WTC11 (cell line): ENCODE measurements at regions of chr9 and their contacts with region 1.

Region 1: GRCh38 chr9:128117613-128118471 is 9.7 kb downstream of the PTGES2 start:
- DNase-seq: peak; percentile 98
- ATAC-seq: peak; percentile 87
- H3K4me3 Mint-ChIP-seq: peak overlapping the region; percentile 50
- H3K27ac Mint-ChIP-seq: 0 out of 2 replicates have a peak overlapping the region, but pooled peaks have one; percentile 63
- H3K4me1 Mint-ChIP-seq: peaks cover 10% of the 10 kb centered on the region
- H3K27me3 Mint-ChIP-seq: no peaks in the 10 kb centered on the region
- CTCF ChIP-seq: peak; percentile 100

Region 2: DNA sequence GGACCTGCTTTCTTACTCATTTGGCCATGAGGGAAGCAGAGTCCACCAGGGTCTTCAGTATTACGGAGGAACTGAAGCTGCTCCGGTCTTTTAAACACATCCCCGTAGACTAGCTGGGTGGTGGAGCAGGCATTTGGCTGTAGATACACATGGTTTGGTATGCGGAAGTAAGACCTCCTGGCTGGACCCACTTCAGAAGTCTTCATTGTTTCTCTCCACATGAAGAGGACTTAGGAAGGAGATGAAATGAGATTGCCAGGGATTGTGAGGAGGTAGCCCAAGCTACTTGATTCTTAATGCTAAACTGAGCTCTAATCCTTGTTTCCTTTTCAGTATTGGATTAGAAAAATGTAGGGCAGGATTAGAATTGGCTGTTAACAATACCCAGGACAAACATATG is 472.9 kb before region 1 on chr9:
- CTCF ChIA-PET with region 1: no interaction called
- POLR2A ChIA-PET with region 1: no interaction called
- DNase-seq: no peak
- ATAC-seq: peak; percentile 47; the same call in 1 of the 2 replicates
- H3K4me3 Mint-ChIP-seq: no peak overlapping the region
- H3K27ac Mint-ChIP-seq: no peak overlapping the region; the same call in 1 of the 2 replicates
- H3K4me1 Mint-ChIP-seq: peaks cover 13% of the 10 kb centered on the region
- H3K27me3 Mint-ChIP-seq: no peaks in the 10 kb centered on the region
- CTCF ChIP-seq: no peak

Region 3: GRCh38 chr9:127943731-127944144 is 174.1 kb before region 1 on chr9:
- CTCF ChIA-PET with region 1: interaction called, 45 read pairs
- POLR2A ChIA-PET with region 1: no interaction called
- DNase-seq: peak; percentile 96
- ATAC-seq: peak; percentile 84
- H3K4me3 Mint-ChIP-seq: no peak overlapping the region
- H3K27ac Mint-ChIP-seq: peak overlapping the region; percentile 58
- H3K4me1 Mint-ChIP-seq: peaks cover 22% of the 10 kb centered on the region
- H3K27me3 Mint-ChIP-seq: no peaks in the 10 kb centered on the region
- CTCF ChIP-seq: peak; percentile 84

Region 4: DNA sequence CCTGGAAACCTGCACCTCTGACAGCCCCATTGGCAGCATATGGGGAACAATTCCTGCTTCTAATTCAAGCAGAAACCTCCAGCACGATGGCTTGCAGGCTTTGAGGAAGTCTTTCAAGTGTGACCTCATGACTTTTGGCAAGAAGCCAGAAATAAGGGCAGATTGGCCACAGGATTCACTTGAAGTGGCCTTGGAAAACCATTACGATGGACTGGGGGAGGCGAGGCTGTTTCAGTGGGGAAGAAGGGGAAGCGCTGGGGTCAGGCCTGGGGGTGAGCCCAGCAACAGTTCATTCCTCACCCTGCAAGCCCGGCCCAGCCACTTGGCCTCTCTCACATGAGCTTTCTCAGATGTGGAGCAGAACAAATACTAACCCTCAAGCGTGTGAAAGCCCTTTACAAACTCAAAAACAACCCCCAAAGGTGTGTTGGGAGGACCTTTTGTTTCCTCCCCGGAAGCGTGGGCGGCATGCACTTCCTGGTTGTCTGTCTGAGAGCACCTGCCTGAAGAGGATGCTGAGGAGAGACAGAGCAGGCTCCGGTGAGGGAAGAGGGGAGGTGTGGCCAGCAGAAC is 110.2 kb before region 1 on chr9:
- CTCF ChIA-PET with region 1: interaction called, 15 read pairs
- POLR2A ChIA-PET with region 1: no interaction called
- DNase-seq: no peak
- ATAC-seq: no peak
- H3K4me3 Mint-ChIP-seq: no peak overlapping the region
- H3K27ac Mint-ChIP-seq: peak overlapping the region; percentile 87
- H3K4me1 Mint-ChIP-seq: peaks cover 14% of the 10 kb centered on the region
- H3K27me3 Mint-ChIP-seq: peaks cover 4% of the 10 kb centered on the region; the same call in 1 of the 2 replicates
- CTCF ChIP-seq: no peak

Region 5: GRCh38 chr9:128067876-128068613 is 49.8 kb before region 1 on chr9 and contains the start of gene SLC25A25:
- CTCF ChIA-PET with region 1: interaction called, 29 read pairs
- POLR2A ChIA-PET with region 1: no interaction called
- DNase-seq: peak; percentile 100
- ATAC-seq: peak; percentile 86
- H3K4me3 Mint-ChIP-seq: peak within 1 kb of the TSS; percentile 85
- H3K27ac Mint-ChIP-seq: peak within 1 kb of the TSS; percentile 67
- H3K4me1 Mint-ChIP-seq: peaks cover 38% of the 10 kb centered on the region
- H3K27me3 Mint-ChIP-seq: no peaks in the 10 kb centered on the region
- CTCF ChIP-seq: no peak
- total RNA-seq, gene SLC25A25: 15.2 to 17.4 TPM (median 15.2 TPM) in 3 replicates

Region 6: GRCh38 chr9:128136816-128137793 is 19.3 kb after region 1 on chr9:
- CTCF ChIA-PET with region 1: interaction called, 15 read pairs
- POLR2A ChIA-PET with region 1: interaction called, 4 read pairs
- DNase-seq: no peak
- ATAC-seq: no peak; the same call in 1 of the 2 replicates
- H3K4me3 Mint-ChIP-seq: no peak overlapping the region
- H3K27ac Mint-ChIP-seq: no peak overlapping the region
- H3K4me1 Mint-ChIP-seq: peaks cover 6% of the 10 kb centered on the region; the same call in 1 of the 2 replicates
- H3K27me3 Mint-ChIP-seq: peaks cover 30% of the 10 kb centered on the region
- CTCF ChIP-seq: no peak

Region 7: GRCh38 chr9:128191406-128192046 is 73.7 kb after region 1 on chr9 and contains the start of gene CIZ1:
- CTCF ChIA-PET with region 1: interaction called, 12 read pairs
- POLR2A ChIA-PET with region 1: no interaction called
- DNase-seq: peak; percentile 75
- ATAC-seq: peak; percentile 91
- H3K4me3 Mint-ChIP-seq: peak within 1 kb of the TSS; percentile 90
- H3K27ac Mint-ChIP-seq: no peak within 1 kb of the TSS
- H3K4me1 Mint-ChIP-seq: peaks cover 11% of the 10 kb centered on the region
- H3K27me3 Mint-ChIP-seq: peaks cover 10% of the 10 kb centered on the region
- CTCF ChIP-seq: peak; percentile 40; the same call in 1 of the 2 replicates
- total RNA-seq, gene CIZ1: 86.1 to 90.6 TPM (median 90.2 TPM) in 3 replicates

Region 8: GRCh38 chr9:128344931-128345605 is 227.2 kb after region 1 on chr9:
- CTCF ChIA-PET with region 1: no interaction called
- POLR2A ChIA-PET with region 1: no interaction called
- DNase-seq: peak; percentile 63
- ATAC-seq: peak; percentile 3; the same call in 1 of the 2 replicates
- H3K4me3 Mint-ChIP-seq: no peak overlapping the region
- H3K27ac Mint-ChIP-seq: no peak overlapping the region
- H3K4me1 Mint-ChIP-seq: peaks cover 5% of the 10 kb centered on the region; the same call in 1 of the 2 replicates
- H3K27me3 Mint-ChIP-seq: no peaks in the 10 kb centered on the region
- CTCF ChIP-seq: no peak